Activated CD4-positive, alpha-beta T cell treated with anti-CD3 and anti-CD28 coated beads for 36 hours (primary cell): ENCODE measurements at regions of chr9 and their contacts with region 1.

Region 1: GRCh38 chr9:35657546-35658136 is at the start of gene RMRP:
- DNase-seq: peak; percentile 97
- ATAC-seq: peak; percentile 95
- H3K4me3 Mint-ChIP-seq: peak within 1 kb of the TSS; percentile 80
- H3K27ac Mint-ChIP-seq: peak within 1 kb of the TSS; percentile 98
- H3K4me1 Mint-ChIP-seq: peaks cover 64% of the 10 kb centered on the region
- H3K27me3 Mint-ChIP-seq: peaks cover 2% of the 10 kb centered on the region
- total RNA-seq, gene RMRP: 894 to 11,462 TPM

Region 2: GRCh38 chr9:35096035-35096849 is 561.4 kb before region 1 on chr9 and contains the start of gene PIGO:
- CTCF ChIA-PET with region 1: no interaction called
- POLR2A ChIA-PET with region 1: no interaction called
- intact Hi-C with region 1: loop called in 1 of 2 experiments (anchors 5 kb)
- DNase-seq: peak; percentile 95
- ATAC-seq: peak; percentile 91
- H3K4me3 Mint-ChIP-seq: peak within 1 kb of the TSS; percentile 85
- H3K27ac Mint-ChIP-seq: peak within 1 kb of the TSS; percentile 92
- H3K4me1 Mint-ChIP-seq: peaks cover 25% of the 10 kb centered on the region
- H3K27me3 Mint-ChIP-seq: no peaks in the 10 kb centered on the region
- total RNA-seq, gene PIGO: 21.0 to 27.2 TPM

Region 3: DNA sequence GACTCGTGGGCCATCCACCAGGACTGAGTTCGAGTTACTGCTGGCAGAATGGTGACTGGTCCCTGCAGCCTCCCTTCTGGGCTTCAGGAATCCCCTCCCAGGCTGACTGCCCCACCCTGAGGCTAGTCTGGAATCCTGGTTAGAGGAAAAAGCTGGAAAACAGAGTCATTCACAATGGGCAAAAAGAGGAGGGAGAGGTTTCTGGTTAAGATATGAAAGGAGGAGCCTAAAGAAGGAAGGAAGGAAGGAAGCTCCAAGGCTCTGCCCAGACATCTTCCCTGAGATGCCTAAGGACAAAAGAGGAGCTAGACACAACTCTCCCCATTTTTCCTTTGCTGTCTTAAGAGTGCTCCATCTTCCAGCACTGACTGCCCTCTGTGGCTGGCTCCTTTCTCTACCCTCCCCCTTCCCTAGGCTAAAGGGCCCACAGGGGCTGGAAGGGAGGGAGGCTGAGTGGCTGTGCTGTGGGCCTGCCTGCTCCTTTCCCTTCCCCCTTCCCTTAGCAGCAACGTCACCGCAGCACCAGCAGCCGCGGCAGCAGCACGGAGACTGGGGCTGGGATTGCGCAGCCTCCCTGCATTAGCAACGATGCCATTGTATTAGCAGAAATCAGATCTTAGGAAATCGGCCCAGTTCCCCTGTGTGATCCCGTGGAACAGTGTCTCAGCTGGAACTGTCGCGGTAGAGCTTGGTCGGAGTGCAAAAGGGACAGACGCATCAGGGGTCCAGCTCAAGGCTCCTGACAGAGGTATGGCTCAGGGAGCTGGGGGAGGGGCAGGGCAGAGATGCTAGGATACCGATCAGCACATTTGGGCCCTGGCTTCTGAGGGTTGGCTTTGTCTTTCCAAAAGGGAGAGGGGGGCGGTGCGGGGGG is 119.0 kb before region 1 on chr9:
- CTCF ChIA-PET with region 1: no interaction called
- POLR2A ChIA-PET with region 1: no interaction called
- intact Hi-C with region 1: no loop called
- DNase-seq: no peak
- ATAC-seq: no peak
- H3K4me3 Mint-ChIP-seq: no peak overlapping the region
- H3K27ac Mint-ChIP-seq: no peak overlapping the region
- H3K4me1 Mint-ChIP-seq: no peaks in the 10 kb centered on the region
- H3K27me3 Mint-ChIP-seq: peaks cover 4% of the 10 kb centered on the region

Region 4: GRCh38 chr9:35611230-35611797 is 46.3 kb before region 1 on chr9:
- CTCF ChIA-PET with region 1: interaction called, 24 read pairs
- POLR2A ChIA-PET with region 1: no interaction called
- intact Hi-C with region 1: loop called in 1 of 2 experiments (anchors 5 kb)
- DNase-seq: peak; percentile 74
- ATAC-seq: peak; percentile 96
- H3K4me3 Mint-ChIP-seq: no peak overlapping the region
- H3K27ac Mint-ChIP-seq: no peak overlapping the region
- H3K4me1 Mint-ChIP-seq: peaks cover 13% of the 10 kb centered on the region
- H3K27me3 Mint-ChIP-seq: no peaks in the 10 kb centered on the region

Region 5: DNA sequence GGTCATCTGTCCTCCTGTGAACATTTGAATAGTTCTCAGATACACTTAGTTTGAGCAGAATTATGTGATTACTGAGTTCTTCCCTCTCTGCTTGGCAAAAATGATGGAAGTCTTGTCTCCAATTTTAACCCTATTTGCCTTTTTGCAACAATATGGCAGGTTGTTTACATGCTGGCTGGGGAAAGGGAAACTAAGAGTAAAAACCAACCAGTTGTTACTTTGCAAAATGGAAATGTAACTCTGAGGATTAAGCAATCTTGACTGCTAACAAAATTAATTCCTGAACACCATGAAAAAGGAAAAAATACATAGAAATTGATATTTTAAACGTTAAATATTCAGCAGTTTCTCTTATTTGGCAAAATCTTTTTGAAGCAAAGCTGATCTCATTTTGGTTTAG is 18.0 kb before region 1 on chr9:
- CTCF ChIA-PET with region 1: interaction called, 89 read pairs
- POLR2A ChIA-PET with region 1: no interaction called
- intact Hi-C with region 1: no loop called
- DNase-seq: no peak
- ATAC-seq: peak; percentile 37
- H3K4me3 Mint-ChIP-seq: peak overlapping the region; percentile 32
- H3K27ac Mint-ChIP-seq: peak overlapping the region; percentile 90
- H3K4me1 Mint-ChIP-seq: peaks cover 54% of the 10 kb centered on the region
- H3K27me3 Mint-ChIP-seq: no peaks in the 10 kb centered on the region

Region 6: GRCh38 chr9:35696525-35697215 is 39.0 kb after region 1 on chr9:
- CTCF ChIA-PET with region 1: interaction called, 23 read pairs
- POLR2A ChIA-PET with region 1: no interaction called
- intact Hi-C with region 1: loop called (anchors 1 to 5 kb)
- DNase-seq: peak; percentile 73
- ATAC-seq: peak; percentile 90
- H3K4me3 Mint-ChIP-seq: no peak overlapping the region
- H3K27ac Mint-ChIP-seq: no peak overlapping the region
- H3K4me1 Mint-ChIP-seq: peaks cover 1% of the 10 kb centered on the region
- H3K27me3 Mint-ChIP-seq: no peaks in the 10 kb centered on the region

Region 7: DNA sequence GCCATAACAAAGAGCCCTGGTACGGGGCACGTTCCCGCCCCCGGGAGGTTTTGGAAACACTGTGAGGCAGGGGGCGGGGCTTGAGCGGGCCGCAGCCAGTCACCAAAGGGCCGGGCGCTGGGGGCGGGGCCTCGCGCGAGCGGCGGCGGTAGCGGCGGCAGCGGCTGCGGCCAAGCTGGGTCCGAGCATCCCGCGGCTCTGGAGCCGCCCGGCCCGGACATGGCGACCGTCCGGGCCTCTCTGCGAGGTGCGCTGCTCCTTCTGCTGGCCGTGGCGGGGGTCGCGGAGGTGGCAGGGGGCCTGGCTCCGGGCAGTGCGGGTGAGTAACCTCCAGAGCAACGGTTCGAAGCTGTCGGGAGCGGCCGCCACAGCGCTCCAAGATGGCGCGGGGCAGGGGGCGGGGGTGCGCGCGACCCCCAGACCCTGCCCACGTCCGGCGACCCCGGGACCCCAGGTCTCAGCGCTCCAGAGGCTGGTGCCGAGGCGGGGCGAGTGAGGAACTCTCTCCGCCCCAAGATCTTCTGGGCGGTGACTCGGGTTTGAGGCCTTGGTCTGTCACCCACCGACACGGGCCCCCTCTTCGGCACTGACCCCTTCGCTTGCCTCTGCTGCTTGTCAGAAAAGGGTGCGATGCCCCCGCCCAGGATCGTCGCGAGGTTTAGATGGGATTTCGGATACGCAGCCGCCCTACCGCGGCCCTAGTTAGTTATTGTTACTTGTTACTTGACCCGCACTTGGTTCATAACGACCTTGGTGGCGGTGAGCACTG is 379.3 kb after region 1 on chr9 and contains the start of gene RECK:
- CTCF ChIA-PET with region 1: no interaction called
- POLR2A ChIA-PET with region 1: no interaction called
- intact Hi-C with region 1: loop called in 1 of 2 experiments (anchors 10 kb)
- DNase-seq: peak; percentile 95
- ATAC-seq: peak; percentile 96
- H3K4me3 Mint-ChIP-seq: peak within 1 kb of the TSS; percentile 83
- H3K27ac Mint-ChIP-seq: peak within 1 kb of the TSS; percentile 85
- H3K4me1 Mint-ChIP-seq: peaks cover 41% of the 10 kb centered on the region
- H3K27me3 Mint-ChIP-seq: no peaks in the 10 kb centered on the region
- total RNA-seq, gene RECK: 5.0 to 5.6 TPM